Ovary (tissue), 10 donors: ENCODE measurements at regions of chr12 and their contacts with region 1.

Region 1: GRCh38 chr12:57893431-57894353 is 47.2 kb upstream of the CTDSP2 start:
- DNase-seq: peak; percentile 96 to 98 (median 97)
- H3K4me3 ChIP-seq: peak overlapping the region; percentile 17
- H3K27ac ChIP-seq: peak overlapping the region; percentile 76 to 100
- H3K4me1 ChIP-seq: peaks cover 58% of the 10 kb centered on the region
- H3K27me3 ChIP-seq: no peaks in the 10 kb centered on the region
- CTCF ChIP-seq: peak; percentile 8 to 24 (median 8)
- EP300 ChIP-seq: peak; percentile 22
- POLR2A ChIP-seq: peak; percentile 27

Region 2: GRCh38 chr12:57846577-57847319 is 46.9 kb before region 1 on chr12 and contains the start of gene CTDSP2:
- intact Hi-C with region 1: loop called (anchors 2 to 5 kb)
- DNase-seq: peak; percentile 99 to 100 (median 100)
- H3K4me3 ChIP-seq: peak within 1 kb of the TSS; percentile 85
- H3K27ac ChIP-seq: peak within 1 kb of the TSS; percentile 98 to 99
- H3K4me1 ChIP-seq: peaks cover 5% of the 10 kb centered on the region
- H3K27me3 ChIP-seq: no peaks in the 10 kb centered on the region
- CTCF ChIP-seq: no peak
- EP300 ChIP-seq: no peak
- POLR2A ChIP-seq: peak; percentile 73
- total RNA-seq, gene CTDSP2: 73.1 to 212 (median 189) TPM